ENCODE measurements at regions of chr22 and their contacts with region 1.

Region 1: GRCh38 chr22:43014869-43015676 is at the start of gene PACSIN2:
- DNase-seq: peak; percentile 99
- ATAC-seq: peak; percentile 100
- H3K4me3 Mint-ChIP-seq: peak within 1 kb of the TSS; percentile 90
- H3K27ac Mint-ChIP-seq: peak within 1 kb of the TSS; percentile 82
- H3K4me1 Mint-ChIP-seq: peaks cover 21% of the 10 kb centered on the region
- H3K27me3 Mint-ChIP-seq: no peaks in the 10 kb centered on the region
- total RNA-seq, gene PACSIN2: 27.9 to 28.1 TPM

Region 2: GRCh38 chr22:42856865-42857704 is 158.0 kb before region 1 on chr22 and contains the start of gene ARFGAP3:
- CTCF ChIA-PET with region 1: interaction called, 3 read pairs
- POLR2A ChIA-PET with region 1: no interaction called
- intact Hi-C with region 1: loop called (anchors 1 to 10 kb)
- DNase-seq: peak; percentile 98
- ATAC-seq: peak; percentile 91
- H3K4me3 Mint-ChIP-seq: peak within 1 kb of the TSS; percentile 83
- H3K27ac Mint-ChIP-seq: peak within 1 kb of the TSS; percentile 85
- H3K4me1 Mint-ChIP-seq: peaks cover 11% of the 10 kb centered on the region
- H3K27me3 Mint-ChIP-seq: peaks cover 6% of the 10 kb centered on the region
- total RNA-seq, gene ARFGAP3: 22.5 to 23.0 TPM

Region 3: GRCh38 chr22:42863349-42863961 is 151.6 kb before region 1 on chr22:
- CTCF ChIA-PET with region 1: interaction called, 3 read pairs
- POLR2A ChIA-PET with region 1: interaction called, 4 read pairs
- intact Hi-C with region 1: loop called in 1 of 2 experiments (anchors 10 kb)
- DNase-seq: peak; percentile 76
- ATAC-seq: peak; percentile 78
- H3K4me3 Mint-ChIP-seq: no peak overlapping the region
- H3K27ac Mint-ChIP-seq: peak overlapping the region; percentile 75
- H3K4me1 Mint-ChIP-seq: peaks cover 19% of the 10 kb centered on the region
- H3K27me3 Mint-ChIP-seq: peaks cover 6% of the 10 kb centered on the region

Region 4: GRCh38 chr22:42964994-42965699 is 49.9 kb before region 1 on chr22:
- CTCF ChIA-PET with region 1: no interaction called
- POLR2A ChIA-PET with region 1: no interaction called
- intact Hi-C with region 1: loop called in 1 of 2 experiments (anchors 2 kb)
- DNase-seq: peak; percentile 33
- ATAC-seq: peak; percentile 65
- H3K4me3 Mint-ChIP-seq: no peak overlapping the region
- H3K27ac Mint-ChIP-seq: peak overlapping the region; percentile 59
- H3K4me1 Mint-ChIP-seq: peaks cover 54% of the 10 kb centered on the region
- H3K27me3 Mint-ChIP-seq: no peaks in the 10 kb centered on the region

Region 5: DNA sequence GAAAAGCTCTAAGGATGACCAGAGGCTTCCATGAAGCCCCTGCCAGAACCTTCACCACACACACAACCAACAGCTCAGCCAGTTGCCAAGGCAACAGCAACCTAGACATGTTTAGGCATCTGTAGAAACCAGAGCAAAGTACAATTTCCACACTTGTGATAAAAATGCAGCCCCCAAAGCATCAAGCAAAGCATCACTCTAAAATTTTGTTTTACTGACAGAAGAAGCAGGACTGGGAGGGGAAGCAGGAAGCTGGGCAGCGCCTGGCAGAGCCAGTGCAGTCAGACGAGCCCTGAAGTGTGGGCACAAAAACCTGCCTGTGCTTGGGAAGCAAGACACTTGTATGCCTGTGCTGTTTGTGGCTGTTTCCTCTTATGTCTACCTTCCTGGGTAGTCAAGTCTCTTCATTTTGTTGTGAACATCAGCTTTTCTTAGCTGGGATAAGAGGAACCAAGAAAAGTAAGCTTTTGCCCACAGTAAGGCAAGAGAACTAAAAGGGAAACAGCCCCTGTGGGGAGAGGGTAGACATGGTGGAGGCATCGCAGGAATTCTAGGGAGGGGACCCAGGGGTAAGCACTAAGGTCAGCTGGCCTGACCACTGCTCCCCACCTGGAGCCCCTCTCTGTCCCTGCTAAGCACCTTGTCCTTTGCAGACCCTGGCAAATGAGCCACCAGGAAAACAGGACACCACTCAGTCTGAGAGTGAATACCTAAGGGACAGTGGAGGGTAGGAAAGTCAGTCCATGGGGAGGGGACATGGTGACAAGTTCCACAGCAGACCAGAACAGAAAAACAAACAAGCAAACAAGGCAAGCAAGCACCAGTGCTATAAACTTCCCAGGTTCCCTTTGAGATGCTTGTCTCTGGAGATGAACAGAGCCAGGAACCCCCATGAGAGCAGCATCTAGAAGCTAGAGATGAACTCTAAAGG is 13.5 kb before region 1 on chr22:
- CTCF ChIA-PET with region 1: interaction called, 10 read pairs
- POLR2A ChIA-PET with region 1: interaction called, 5 read pairs
- intact Hi-C with region 1: loop called (anchors 1 to 2 kb)
- DNase-seq: peak; percentile 22
- ATAC-seq: peak; percentile 13
- H3K4me3 Mint-ChIP-seq: no peak overlapping the region
- H3K27ac Mint-ChIP-seq: peak overlapping the region; percentile 30
- H3K4me1 Mint-ChIP-seq: peaks cover 89% of the 10 kb centered on the region
- H3K27me3 Mint-ChIP-seq: no peaks in the 10 kb centered on the region

Region 6: GRCh38 chr22:43230971-43231723 is 216.1 kb after region 1 on chr22:
- CTCF ChIA-PET with region 1: no interaction called
- POLR2A ChIA-PET with region 1: no interaction called
- intact Hi-C with region 1: no loop called
- DNase-seq: peak; percentile 83
- ATAC-seq: peak; percentile 89
- H3K4me3 Mint-ChIP-seq: no peak overlapping the region
- H3K27ac Mint-ChIP-seq: no peak overlapping the region
- H3K4me1 Mint-ChIP-seq: peaks cover 4% of the 10 kb centered on the region
- H3K27me3 Mint-ChIP-seq: peaks cover 3% of the 10 kb centered on the region